ENCODE measurements at regions of chr2 and their contacts with region 1.

Region 1: GRCh38 chr2:201964631-201965206 is 68.9 kb upstream of the FZD7 start:
- DNase-seq: no peak
- ATAC-seq: peak; percentile 24; the same call in 1 of the 3 replicates
- H3K4me3 ChIP-seq: no peak overlapping the region
- H3K27ac ChIP-seq: no peak overlapping the region
- H3K4me1 ChIP-seq: no peaks in the 10 kb centered on the region
- H3K27me3 ChIP-seq: no peaks in the 10 kb centered on the region
- CTCF ChIP-seq: no peak
- EP300 ChIP-seq: no peak
- POLR2A ChIP-seq: no peak
- RAD21 ChIP-seq: no peak

Region 2: GRCh38 chr2:202017940-202018339 is 53.2 kb after region 1 on chr2:
- CTCF ChIA-PET with region 1: interaction called, 11 read pairs
- POLR2A ChIA-PET with region 1: no interaction called
- RAD21 ChIA-PET with region 1: no interaction called
- SMC1A ChIA-PET with region 1: no interaction called
- in situ Hi-C with region 1: no loop called
- intact Hi-C with region 1: no loop called
- DNase-seq: no peak
- ATAC-seq: no peak
- H3K4me3 ChIP-seq: no peak overlapping the region
- H3K27ac ChIP-seq: no peak overlapping the region
- H3K4me1 ChIP-seq: no peaks in the 10 kb centered on the region
- H3K27me3 ChIP-seq: no peaks in the 10 kb centered on the region; a peak in 1 of 4 replicates
- CTCF ChIP-seq: no peak
- EP300 ChIP-seq: no peak
- POLR2A ChIP-seq: no peak
- RAD21 ChIP-seq: no peak

Region 3: GRCh38 chr2:202056392-202057010 is 91.8 kb after region 1 on chr2:
- CTCF ChIA-PET with region 1: interaction called, 4 read pairs
- POLR2A ChIA-PET with region 1: no interaction called
- RAD21 ChIA-PET with region 1: no interaction called
- SMC1A ChIA-PET with region 1: interaction called, 5 read pairs
- in situ Hi-C with region 1: no loop called
- intact Hi-C with region 1: loop called (anchors 5 kb)
- DNase-seq: no peak
- ATAC-seq: peak; percentile 56; the same call in 2 of the 3 replicates
- H3K4me3 ChIP-seq: no peak overlapping the region
- H3K27ac ChIP-seq: no peak overlapping the region
- H3K4me1 ChIP-seq: no peaks in the 10 kb centered on the region
- H3K27me3 ChIP-seq: no peaks in the 10 kb centered on the region; a peak in 1 of 4 replicates
- CTCF ChIP-seq: peak in 2 of 3 experiments; percentile 23 to 34; a peak in 3 of 6 replicates
- EP300 ChIP-seq: no peak
- POLR2A ChIP-seq: no peak
- RAD21 ChIP-seq: peak; percentile 42; the same call in 1 of the 2 replicates

Region 4: GRCh38 chr2:202104278-202104870 is 139.7 kb after region 1 on chr2:
- CTCF ChIA-PET with region 1: interaction called, 8 read pairs
- POLR2A ChIA-PET with region 1: no interaction called
- RAD21 ChIA-PET with region 1: interaction called, 3 read pairs
- SMC1A ChIA-PET with region 1: interaction called, 4 read pairs
- in situ Hi-C with region 1: no loop called
- intact Hi-C with region 1: loop called (anchors 5 kb)
- DNase-seq: peak; percentile 13
- ATAC-seq: peak; percentile 95
- H3K4me3 ChIP-seq: no peak overlapping the region
- H3K27ac ChIP-seq: no peak overlapping the region
- H3K4me1 ChIP-seq: no peaks in the 10 kb centered on the region
- H3K27me3 ChIP-seq: peaks cover 2 to 3% of the 10 kb centered on the region in 2 experiments; a peak in 1 of 4 replicates
- CTCF ChIP-seq: peak; percentile 65 to 91 (median 81)
- EP300 ChIP-seq: no peak
- POLR2A ChIP-seq: no peak
- RAD21 ChIP-seq: peak; percentile 77

Measured in GM12878 (cell line).